ENCODE measurements at regions of chr12 and their contacts with region 1.

Region 1: DNA sequence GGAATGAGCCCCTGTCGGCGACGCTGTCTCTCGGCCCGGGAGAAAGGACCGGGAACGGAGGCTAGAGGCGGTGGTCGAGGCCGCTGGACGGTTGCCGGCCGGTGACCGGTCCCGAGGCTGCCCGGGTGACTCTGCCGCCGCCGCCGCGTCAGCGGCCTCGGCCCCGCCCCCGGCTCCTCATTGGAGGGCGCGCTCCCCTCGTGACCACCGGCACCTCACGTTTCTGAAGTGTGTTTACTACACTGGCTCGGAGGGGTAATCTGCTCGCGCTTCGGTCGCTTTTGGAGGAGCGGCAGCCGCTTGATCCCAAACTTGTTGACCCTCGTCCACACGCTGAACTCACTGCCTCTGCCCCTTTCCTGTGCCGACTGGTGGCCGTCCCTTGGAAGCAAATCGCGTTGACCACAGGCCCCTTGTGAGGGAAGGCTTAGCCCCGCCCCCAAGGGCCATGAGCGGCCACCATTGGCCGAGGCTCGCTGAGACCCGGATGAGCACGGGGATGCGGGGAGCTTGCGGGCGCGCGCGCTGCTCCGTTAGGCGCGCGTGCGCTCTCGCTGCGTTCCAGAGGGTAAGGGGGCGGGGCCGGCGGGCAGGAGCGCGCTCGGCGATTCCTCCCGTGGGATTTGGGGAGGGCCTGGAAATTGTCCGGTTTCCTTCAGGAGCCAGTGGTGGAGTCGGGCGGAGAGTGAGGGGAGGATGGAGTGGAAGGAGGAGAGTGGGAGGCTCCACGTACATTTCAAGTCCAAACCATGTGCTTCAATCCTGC is at the start of gene CRY1:
- DNase-seq: peak; percentile 93
- H3K4me3 Mint-ChIP-seq: no peak within 1 kb of the TSS
- H3K27ac Mint-ChIP-seq: no peak within 1 kb of the TSS
- H3K4me1 Mint-ChIP-seq: peaks cover 4% of the 10 kb centered on the region
- H3K27me3 Mint-ChIP-seq: peaks cover 3% of the 10 kb centered on the region
- total RNA-seq, gene CRY1: 15.2 to 17.5 TPM

Region 2: DNA sequence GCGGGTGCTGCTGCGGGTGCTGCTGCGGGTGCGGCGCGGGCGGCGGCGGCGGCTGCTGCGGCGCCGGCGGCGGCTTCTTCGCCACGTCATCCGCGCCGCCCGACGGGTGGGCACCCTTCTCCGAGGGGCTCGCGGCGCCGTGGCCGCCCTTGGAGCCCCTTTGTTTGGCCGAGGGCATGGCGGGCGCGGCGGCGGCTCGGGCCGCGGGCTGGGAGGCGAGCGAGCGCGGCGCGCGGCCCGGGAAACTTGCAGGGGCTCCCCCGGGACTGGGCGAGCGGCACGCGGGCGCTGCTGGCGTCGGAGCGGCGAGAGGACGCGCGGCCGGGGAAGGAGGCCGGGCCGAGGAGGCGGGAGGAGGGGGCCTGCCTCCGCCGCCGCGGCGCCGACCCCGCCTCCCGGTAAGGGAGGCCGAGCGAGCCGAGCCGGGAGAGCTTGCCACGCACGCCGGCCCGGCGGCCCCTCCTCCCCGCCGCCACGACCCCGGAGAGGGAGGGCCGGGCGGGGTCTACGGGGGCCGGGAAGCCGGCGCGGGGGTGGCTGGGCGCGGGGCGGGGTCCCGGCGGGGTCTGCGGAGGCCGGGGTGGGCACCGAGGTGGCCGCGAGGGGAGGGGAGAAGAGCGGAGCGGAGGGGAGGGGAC is 845.8 kb before region 1 on chr12 and contains the start of gene CKAP4:
- CTCF ChIA-PET with region 1: no interaction called
- intact Hi-C with region 1: loop called (anchors 2 kb)
- DNase-seq: peak; percentile 60
- H3K4me3 Mint-ChIP-seq: peak within 1 kb of the TSS; percentile 75
- H3K27ac Mint-ChIP-seq: peak within 1 kb of the TSS; percentile 85
- H3K4me1 Mint-ChIP-seq: peaks cover 24% of the 10 kb centered on the region
- H3K27me3 Mint-ChIP-seq: no peaks in the 10 kb centered on the region
- total RNA-seq, gene CKAP4: 19.0 to 19.1 TPM

Region 3: DNA sequence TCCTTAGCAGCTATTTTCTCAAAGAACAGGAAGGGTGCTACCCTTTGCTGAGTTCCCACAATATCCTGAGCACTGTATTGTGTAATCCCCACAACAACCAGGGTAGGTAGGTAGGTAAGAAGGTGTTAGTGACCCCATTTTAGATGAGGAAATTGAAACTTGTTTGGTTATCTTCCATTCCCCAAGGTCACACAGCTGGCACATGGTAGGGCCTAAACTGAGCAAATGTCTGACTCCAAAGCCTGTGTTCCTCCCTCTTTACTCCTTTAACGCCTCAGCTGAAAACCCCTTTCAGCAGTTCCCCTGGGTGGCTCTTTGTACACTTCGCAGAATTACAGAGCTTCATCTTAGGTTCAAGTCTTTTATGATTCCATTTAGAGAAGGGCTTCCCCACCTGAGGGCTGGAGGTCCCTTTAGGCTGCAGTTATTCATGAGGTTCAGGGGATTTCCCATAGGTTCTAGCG is 345.6 kb before region 1 on chr12:
- CTCF ChIA-PET with region 1: no interaction called
- intact Hi-C with region 1: loop called (anchors 1 kb)
- DNase-seq: peak; percentile 63
- H3K4me3 Mint-ChIP-seq: peak overlapping the region; percentile 12
- H3K27ac Mint-ChIP-seq: peak overlapping the region; percentile 90
- H3K4me1 Mint-ChIP-seq: peaks cover 32% of the 10 kb centered on the region
- H3K27me3 Mint-ChIP-seq: no peaks in the 10 kb centered on the region

Region 4: GRCh38 chr12:106986625-106987430 is 106.8 kb before region 1 on chr12 and contains the start of gene MTERF2:
- CTCF ChIA-PET with region 1: no interaction called
- intact Hi-C with region 1: loop called (anchors 1 kb)
- DNase-seq: peak; percentile 88
- H3K4me3 Mint-ChIP-seq: peak within 1 kb of the TSS; percentile 90
- H3K27ac Mint-ChIP-seq: peak within 1 kb of the TSS; percentile 70
- H3K4me1 Mint-ChIP-seq: peaks cover 36% of the 10 kb centered on the region
- H3K27me3 Mint-ChIP-seq: no peaks in the 10 kb centered on the region
- total RNA-seq, gene MTERF2: 5.2 to 6.5 TPM

Region 5: GRCh38 chr12:107317751-107318613 is 224.4 kb after region 1 on chr12:
- CTCF ChIA-PET with region 1: no interaction called
- intact Hi-C with region 1: loop called (anchors 1 kb)
- DNase-seq: peak; percentile 92
- H3K4me3 Mint-ChIP-seq: peak overlapping the region; percentile 85
- H3K27ac Mint-ChIP-seq: no peak overlapping the region
- H3K4me1 Mint-ChIP-seq: peaks cover 24% of the 10 kb centered on the region
- H3K27me3 Mint-ChIP-seq: no peaks in the 10 kb centered on the region

Region 6: DNA sequence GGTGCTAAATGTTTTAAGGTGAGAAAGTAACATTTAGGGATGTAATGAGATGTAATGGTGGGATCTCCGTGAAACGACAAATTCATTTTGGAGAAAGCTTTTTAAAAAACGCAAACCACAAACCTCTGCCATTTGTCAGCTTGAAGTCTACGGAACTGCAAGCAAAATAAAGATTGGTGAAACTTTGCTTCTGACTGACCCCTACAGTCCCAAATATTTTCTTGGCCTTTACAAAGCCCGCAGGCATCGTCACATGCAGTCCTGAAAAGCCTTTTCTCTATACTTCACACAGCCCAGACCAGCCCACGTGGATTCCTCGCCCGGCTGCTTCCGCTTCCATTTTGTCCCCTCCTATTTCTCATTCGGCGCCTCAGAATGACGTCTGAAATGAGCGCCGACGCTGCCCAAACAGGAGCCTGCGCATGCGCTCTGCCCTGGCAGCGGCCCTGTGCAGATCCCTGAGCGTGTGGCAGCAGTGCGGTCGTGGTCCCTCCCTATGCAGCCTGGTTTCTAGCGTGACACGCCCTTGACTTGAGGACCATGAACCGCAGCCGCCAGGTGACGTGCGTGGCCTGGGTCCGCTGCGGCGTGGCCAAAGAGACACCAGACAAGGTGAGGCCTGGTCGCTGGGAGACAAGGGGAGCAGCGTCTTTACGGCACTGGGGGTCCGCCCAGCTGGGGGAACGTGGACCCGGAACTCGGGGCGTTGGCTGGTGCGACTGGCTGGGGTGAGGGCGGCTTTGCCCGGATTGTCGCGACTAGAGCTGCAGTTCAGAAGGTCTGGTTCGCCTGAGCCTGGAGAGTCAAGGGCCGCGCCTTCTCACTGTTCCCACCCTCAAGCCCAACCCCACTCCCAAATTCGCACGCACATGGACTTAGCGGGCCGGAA is 592.0 kb after region 1 on chr12 and contains the start of gene PWP1:
- CTCF ChIA-PET with region 1: no interaction called
- intact Hi-C with region 1: loop called (anchors 1 kb)
- DNase-seq: peak; percentile 95
- H3K4me3 Mint-ChIP-seq: peak within 1 kb of the TSS; percentile 90
- H3K27ac Mint-ChIP-seq: peak within 1 kb of the TSS; percentile 95
- H3K4me1 Mint-ChIP-seq: peaks cover 20% of the 10 kb centered on the region
- H3K27me3 Mint-ChIP-seq: no peaks in the 10 kb centered on the region
- total RNA-seq, gene PWP1: 35.0 to 37.1 TPM

Measured in activated naive CD4-positive, alpha-beta T cell treated with anti-CD3 and anti-CD28 coated beads for 36 hours (primary cell).